ENCODE measurements at regions of chr1 and their contacts with region 1.

Region 1: DNA sequence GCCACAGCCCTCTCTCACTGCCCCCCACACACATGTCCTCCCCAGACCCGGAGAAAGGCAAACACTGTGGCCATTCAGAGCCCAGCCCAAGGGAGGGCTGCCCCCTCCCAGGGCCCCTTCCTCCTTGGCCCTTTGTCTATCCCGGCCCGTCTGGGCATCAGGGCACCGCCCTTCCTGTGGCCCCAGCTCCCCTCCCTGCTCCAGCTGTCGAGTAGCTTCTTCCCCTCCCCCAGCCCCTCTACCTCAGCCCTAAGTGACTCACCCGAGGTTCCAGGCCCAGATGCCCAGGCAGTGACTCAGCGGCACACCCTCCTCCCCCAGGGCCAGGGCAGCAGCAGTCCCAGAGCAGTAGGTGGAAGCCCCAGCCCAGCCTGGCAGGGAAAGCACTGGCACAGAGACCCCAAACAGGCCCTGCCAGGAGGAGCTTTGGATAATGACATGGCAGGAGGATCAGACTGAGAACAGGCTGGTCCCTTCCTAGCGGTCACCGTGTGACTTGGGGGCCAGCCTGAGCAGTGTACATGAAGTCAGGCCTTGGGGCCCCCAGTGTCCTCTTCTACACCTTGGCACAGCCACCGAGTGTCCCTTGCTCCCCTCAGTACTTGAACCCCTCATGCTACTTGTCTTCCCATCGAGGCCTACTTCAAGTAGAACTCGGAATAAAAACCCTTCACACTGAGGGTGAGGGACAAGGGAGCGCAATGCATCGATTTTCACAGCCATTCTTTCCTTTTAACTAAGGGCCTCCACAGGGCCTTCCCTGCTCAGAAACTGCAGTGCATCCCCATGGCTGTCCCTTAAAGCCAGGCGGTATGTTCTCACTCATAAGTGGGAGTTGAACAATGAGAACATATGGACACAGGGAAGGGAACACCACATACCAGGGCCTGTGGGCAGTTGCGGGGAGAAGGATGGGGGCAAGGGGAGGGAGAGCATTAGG is 1.1 kb upstream of the S100A2 start:
- DNase-seq: peak; percentile 37
- ATAC-seq: peak; percentile 79
- H3K4me3 ChIP-seq: no peak overlapping the region
- H3K27ac ChIP-seq: 0 out of 2 replicates have a peak overlapping the region, but pooled peaks have one; percentile 11
- H3K4me1 ChIP-seq: peaks cover 15% of the 10 kb centered on the region
- H3K27me3 ChIP-seq: no peaks in the 10 kb centered on the region
- CTCF ChIP-seq: no peak
- EP300 ChIP-seq: no peak
- POLR2A ChIP-seq: no peak; the same call in 1 of the 2 replicates
- RAD21 ChIP-seq: no peak

Region 2: DNA sequence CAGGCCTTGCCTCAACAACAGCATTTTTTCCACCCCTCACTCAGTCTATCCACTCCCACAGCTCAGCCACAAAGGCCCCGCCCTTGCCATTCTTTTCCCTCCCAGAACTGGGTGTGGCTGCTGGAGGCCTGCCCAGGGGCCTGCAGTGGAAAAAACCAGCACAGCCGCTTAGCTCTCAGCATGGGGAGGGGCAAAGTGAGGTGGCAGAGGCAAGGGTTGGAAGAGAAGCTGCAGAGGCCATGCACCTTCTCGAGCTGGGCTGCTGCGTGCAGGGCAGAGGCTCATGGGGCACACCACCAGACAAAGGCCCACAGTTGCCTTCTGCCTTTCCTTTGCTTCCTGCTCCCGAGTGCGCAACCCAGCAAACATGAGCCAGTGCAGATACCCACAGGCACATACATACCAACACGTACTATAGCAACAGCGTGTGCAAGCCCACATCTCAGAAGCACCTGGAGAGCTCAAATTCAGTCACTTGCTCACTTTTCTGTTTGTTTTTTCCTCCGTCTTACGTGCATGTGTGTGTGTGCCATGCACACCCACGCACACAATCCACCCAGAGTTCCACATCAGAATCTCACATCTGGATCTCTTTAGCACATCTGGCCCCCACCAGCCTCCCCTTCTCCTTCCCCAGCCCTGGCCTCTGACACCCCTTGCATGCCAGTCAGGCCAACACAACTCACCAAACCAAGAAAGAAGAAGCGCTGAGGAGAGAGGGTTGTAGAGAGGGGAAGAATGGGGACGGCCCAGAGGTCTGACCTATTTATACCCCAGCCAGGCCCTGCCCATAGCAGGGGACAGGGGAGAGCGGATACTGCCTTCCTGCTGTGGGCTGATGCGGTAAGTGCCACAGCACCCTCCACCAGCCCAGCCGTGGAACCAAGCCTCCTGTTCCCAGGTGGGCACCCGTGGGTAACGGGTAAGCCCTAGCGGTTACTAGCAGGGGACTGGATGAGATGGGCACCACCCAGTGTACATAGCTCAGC is 21.3 kb before region 1 on chr1 and contains the start of gene S100A4:
- CTCF ChIA-PET with region 1: interaction called, 11 read pairs
- POLR2A ChIA-PET with region 1: interaction called, 34 read pairs
- RAD21 ChIA-PET with region 1: interaction called, 13 read pairs
- SMC1A ChIA-PET with region 1: interaction called, 16 read pairs
- in situ Hi-C with region 1: no loop called
- intact Hi-C with region 1: no loop called
- DNase-seq: peak; percentile 46
- ATAC-seq: peak; percentile 85
- H3K4me3 ChIP-seq: no peak within 1 kb of the TSS
- H3K27ac ChIP-seq: no peak within 1 kb of the TSS
- H3K4me1 ChIP-seq: peaks cover 25% of the 10 kb centered on the region
- H3K27me3 ChIP-seq: no peaks in the 10 kb centered on the region
- CTCF ChIP-seq: no peak
- EP300 ChIP-seq: no peak
- POLR2A ChIP-seq: peak; percentile 58; the same call in 1 of the 2 replicates
- RAD21 ChIP-seq: no peak
- polyA plus RNA-seq, gene S100A4: 73.9 to 104 TPM